Common myeloid progenitor, CD34-positive (primary cell): ENCODE measurements at regions of chr1 and their contacts with region 1.

Region 1: DNA sequence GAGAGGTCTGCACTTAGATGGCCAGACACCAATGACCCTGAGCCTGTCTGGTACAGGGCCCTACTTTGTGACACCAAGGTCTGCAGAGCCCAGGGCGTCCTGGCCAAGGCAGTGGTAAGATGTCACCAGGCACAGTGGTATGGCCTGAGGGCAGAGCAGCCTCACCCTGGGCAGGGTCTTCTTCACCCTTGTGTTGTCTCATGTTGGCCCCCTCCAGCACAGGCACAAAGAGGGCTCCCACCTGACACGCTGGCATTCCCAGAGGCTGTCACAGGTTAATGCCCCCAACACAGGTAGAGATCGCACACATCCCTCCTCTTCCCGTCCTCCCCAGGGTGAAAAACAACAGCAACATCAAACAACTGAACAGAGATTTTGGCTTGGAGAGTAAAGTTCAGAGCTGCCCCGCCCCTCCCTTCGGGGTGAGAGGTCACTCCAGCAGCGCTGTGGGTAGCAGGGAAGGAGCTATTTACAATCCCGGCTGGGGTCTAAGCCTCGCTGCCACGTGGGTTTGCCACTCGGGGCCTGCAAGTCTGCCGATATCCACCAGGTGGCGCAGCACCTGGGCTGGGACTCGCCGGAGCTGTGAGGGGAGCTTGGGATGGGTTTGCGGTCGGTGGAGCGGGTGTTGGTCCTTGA is 12.6 kb downstream of the EFNA3 start:
- DNase-seq: peak; percentile 79 to 85 (median 80)
- H3K4me3 ChIP-seq: no peak overlapping the region
- H3K27ac ChIP-seq: no peak overlapping the region
- H3K4me1 ChIP-seq: peaks cover 0 to 30% (median 27%) of the 10 kb centered on the region in 4 experiments
- H3K27me3 ChIP-seq: no peaks in the 10 kb centered on the region

Region 2: GRCh38 chr1:155105604-155106022 is 14.4 kb after region 1 on chr1:
- CTCF ChIA-PET with region 1: interaction called, 17 read pairs
- POLR2A ChIA-PET with region 1: no interaction called
- DNase-seq: no peak
- H3K4me3 ChIP-seq: no peak overlapping the region
- H3K27ac ChIP-seq: no peak overlapping the region
- H3K4me1 ChIP-seq: peaks cover 0 to 22% (median 16%) of the 10 kb centered on the region in 4 experiments
- H3K27me3 ChIP-seq: no peaks in the 10 kb centered on the region

Region 3: DNA sequence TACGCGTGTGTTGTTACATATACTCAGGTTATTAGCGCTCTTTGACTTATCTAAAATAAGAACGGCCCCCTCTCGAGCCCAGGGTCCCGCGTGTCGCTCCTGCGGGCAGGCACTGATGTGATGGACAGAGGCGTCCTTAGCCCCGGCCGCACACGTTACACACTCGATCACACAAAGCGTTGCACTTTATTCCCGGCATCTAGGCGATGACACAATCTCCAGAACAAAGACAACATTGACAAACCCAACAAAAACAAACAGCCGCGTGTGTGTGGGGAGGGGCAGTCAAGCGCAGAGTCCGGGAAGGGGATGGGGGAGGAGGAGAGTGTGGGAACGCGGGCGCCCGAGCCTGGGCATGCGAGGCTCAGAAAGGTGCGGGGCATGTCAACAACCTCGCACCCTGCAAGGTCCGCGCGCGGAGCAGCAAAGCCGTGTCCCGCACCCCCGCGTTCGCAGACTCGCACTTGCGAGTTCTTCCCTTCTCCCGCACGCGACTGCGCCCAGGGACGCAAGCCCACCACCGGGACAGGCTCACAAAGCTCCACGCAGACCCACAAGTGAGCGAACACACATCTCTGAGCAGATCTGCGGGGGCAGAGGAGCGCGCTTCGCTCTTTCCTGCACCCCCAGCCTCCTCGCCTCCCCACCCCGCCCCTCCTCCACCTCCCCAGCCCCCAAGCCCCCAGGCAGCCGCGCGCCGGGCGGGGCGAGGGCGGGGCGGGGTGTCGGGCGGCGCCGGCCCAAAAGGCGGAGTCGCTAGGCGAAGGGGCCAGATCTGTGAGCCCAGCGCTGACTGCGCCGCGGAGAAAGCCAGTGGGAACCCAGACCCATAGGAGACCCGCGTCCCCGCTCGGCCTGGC is 36.1 kb after region 1 on chr1 and contains the start of gene EFNA1:
- CTCF ChIA-PET with region 1: interaction called, 48 read pairs
- POLR2A ChIA-PET with region 1: interaction called, 4 read pairs
- DNase-seq: peak in 2 of 3 donors; percentile 42 to 56
- H3K4me3 ChIP-seq: peak within 1 kb of the TSS; percentile 47 to 89 (median 82)
- H3K27ac ChIP-seq: peak within 1 kb of the TSS in 1 of 2 experiments; percentile 78
- H3K4me1 ChIP-seq: peaks cover 9 to 54% (median 49%) of the 10 kb centered on the region in 4 experiments
- H3K27me3 ChIP-seq: peaks cover 0 to 9% (median 3%) of the 10 kb centered on the region in 5 experiments

Region 4: GRCh38 chr1:155167166-155168104 is 76.2 kb after region 1 on chr1:
- CTCF ChIA-PET with region 1: interaction called, 258 read pairs
- POLR2A ChIA-PET with region 1: interaction called, 5 read pairs
- DNase-seq: peak; percentile 87 to 91 (median 91)
- H3K4me3 ChIP-seq: peak overlapping the region in 6 of 7 experiments; percentile 29 to 69 (median 43)
- H3K27ac ChIP-seq: peak overlapping the region in 1 of 2 experiments; percentile 22
- H3K4me1 ChIP-seq: peaks cover 0 to 33% (median 28%) of the 10 kb centered on the region in 4 experiments
- H3K27me3 ChIP-seq: no peaks in the 10 kb centered on the region